ENCODE measurements at regions of chr1 and their contacts with region 1.

Region 1: DNA sequence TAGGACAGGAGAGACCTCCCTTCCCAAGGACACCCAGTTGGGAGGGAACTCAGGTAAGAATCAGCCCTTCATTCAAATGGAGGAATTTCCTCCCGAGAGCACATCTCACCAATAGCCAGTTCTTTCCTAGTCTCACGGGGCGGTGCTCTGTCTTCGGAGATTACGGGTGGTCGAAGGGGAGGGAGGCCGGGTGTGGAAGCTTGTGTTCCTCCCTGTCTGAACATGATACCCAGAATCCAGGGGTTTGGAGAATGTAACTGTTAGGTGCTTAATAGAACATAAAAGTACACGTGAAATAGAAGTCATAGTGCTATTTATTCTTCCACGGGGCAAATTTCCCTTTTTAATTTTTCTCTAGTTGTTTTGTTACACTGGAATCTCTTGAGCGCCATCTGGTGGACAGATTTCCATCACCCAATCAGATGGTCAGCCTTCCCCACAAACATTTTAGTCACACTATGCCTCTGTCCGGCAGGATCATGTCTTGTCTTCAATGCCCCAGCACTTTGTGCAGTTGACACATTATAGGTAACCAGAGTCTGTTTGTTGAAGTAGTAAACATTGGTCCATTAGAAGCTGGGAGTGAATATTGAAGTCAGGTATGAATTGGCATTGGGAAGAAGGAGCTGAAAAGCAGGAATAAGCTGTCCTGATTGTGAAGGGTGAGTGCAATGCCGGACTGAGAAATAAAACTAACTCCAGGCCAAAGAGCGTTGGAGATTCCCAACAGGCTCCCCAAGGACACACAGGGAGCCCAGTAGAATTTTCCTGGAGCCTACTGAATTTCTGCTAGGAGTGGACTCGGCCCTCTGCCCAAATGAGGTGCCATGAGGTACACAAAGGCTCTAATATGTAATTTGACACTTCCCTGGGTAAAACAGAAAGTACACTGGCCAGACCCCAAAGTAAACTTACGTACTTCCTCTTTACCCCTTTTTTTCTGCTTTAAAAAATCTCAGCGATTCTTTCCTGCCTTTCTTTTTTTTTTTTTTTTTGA is 27.6 kb upstream of the ZNF697 start:
- DNase-seq: peak; percentile 9 to 59 (median 51)
- ATAC-seq: peak; percentile 63
- H3K4me3 ChIP-seq: peak overlapping the region; percentile 26
- H3K4me3 Mint-ChIP-seq: peak overlapping the region in 9 of 10 donors; percentile 53 to 83 (median 75)
- H3K27ac ChIP-seq: no peak overlapping the region
- H3K27ac Mint-ChIP-seq: peak overlapping the region in 1 of 9 donors; percentile 21
- H3K4me1 ChIP-seq: peaks cover 0 to 4% of the 10 kb centered on the region in 2 donors
- H3K4me1 Mint-ChIP-seq: peaks cover 0 to 6% (median 4%) of the 10 kb centered on the region in 7 donors
- H3K27me3 ChIP-seq: no peaks in the 10 kb centered on the region
- H3K27me3 Mint-ChIP-seq: peaks cover 11 to 55% (median 31%) of the 10 kb centered on the region in 5 donors

Region 2: DNA sequence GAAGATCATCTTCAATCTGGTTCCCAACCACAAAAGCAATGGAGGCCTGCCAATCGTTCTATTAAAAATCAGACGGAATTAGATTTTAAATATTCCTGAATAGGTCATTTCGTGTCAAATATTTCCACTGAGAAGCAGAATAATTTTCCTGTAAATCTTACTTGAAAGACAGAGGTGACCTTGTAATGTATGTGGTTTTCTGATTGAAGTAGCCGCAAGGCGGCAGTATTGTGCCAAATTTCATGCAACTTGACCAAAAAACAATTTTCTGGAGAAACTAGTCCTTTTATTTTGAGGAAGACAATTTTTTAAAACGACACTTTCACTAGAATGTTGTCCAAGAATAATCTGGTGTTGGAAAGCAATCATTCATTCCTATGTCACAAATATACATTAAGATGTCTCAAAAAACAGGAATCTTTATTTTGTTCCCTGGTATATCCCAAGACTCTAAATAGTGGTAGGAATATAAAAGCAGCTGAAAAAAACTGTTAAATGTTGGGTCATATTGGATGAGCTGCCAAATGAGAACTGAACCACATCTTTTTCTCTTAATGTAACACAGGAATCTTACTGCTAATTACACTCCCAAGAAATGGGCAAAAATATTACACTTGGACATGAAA is 1524.2 kb before region 1 on chr1:
- CTCF ChIA-PET with region 1: no interaction called
- POLR2A ChIA-PET with region 1: no interaction called
- intact Hi-C with region 1: loop called in 1 of 2 experiments (anchors 10 kb)
- DNase-seq: peak in 1 of 9 donors; percentile 4
- ATAC-seq: no peak
- H3K4me3 ChIP-seq: no peak overlapping the region
- H3K4me3 Mint-ChIP-seq: no peak overlapping the region
- H3K27ac ChIP-seq: no peak overlapping the region
- H3K27ac Mint-ChIP-seq: no peak overlapping the region
- H3K4me1 ChIP-seq: no peaks in the 10 kb centered on the region
- H3K4me1 Mint-ChIP-seq: no peaks in the 10 kb centered on the region
- H3K27me3 ChIP-seq: no peaks in the 10 kb centered on the region
- H3K27me3 Mint-ChIP-seq: peaks cover 0 to 4% (median 0%) of the 10 kb centered on the region in 5 donors

Region 3: DNA sequence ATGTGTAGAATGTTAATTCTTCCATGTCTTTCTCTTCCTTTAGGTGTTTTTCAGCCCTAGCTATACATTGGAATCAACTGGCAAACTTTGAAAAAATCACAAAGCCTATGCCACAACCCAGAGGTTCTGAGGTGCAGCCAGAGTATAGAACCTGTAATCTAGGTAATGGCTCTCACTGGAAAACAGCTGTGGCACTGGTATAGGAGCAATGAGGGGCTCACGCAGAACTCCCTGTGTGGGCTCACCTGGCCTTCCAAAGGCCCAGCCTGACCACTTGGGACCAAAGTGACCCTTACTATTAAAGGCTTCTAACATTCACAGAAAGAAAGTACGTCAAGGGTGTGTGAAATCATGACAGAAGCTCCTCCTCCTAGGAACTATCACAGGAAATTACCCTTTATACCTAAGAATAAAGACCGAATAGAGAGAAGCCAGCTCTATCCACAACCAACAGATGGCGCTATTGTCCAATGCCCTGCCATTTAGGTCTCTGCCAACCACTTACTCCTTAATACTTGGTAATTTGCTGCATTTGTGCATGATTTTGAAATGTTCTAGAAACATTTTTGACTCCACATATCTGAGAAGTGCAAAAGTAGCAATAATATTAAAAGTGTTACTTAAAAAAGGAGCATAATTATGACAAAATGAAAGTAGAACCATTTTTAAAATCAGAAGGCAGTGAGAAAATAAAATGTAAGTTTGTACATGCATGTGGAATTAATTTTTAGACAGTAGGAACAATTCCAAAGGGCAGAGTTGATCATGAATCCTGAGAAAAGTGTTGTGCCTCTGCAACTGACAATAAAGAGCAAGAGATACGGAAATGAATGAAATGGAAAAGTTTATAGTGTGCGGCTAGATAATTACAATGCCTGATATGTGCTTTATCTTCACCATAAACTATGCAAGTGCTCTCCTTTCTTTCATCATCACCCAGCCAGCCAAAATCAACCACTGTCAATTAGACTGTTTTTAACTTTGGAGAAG is 400.2 kb before region 1 on chr1:
- CTCF ChIA-PET with region 1: interaction called, 4 read pairs
- POLR2A ChIA-PET with region 1: no interaction called
- intact Hi-C with region 1: loop called in 1 of 2 experiments (anchors 1 kb)
- DNase-seq: peak in 6 of 9 donors; percentile 21 to 43 (median 24)
- ATAC-seq: peak; percentile 59
- H3K4me3 ChIP-seq: no peak overlapping the region
- H3K4me3 Mint-ChIP-seq: no peak overlapping the region
- H3K27ac ChIP-seq: no peak overlapping the region
- H3K27ac Mint-ChIP-seq: no peak overlapping the region
- H3K4me1 ChIP-seq: no peaks in the 10 kb centered on the region
- H3K4me1 Mint-ChIP-seq: peaks cover 0 to 2% (median 0%) of the 10 kb centered on the region in 7 donors
- H3K27me3 ChIP-seq: no peaks in the 10 kb centered on the region
- H3K27me3 Mint-ChIP-seq: peaks cover 3 to 23% (median 10%) of the 10 kb centered on the region in 5 donors

Region 4: DNA sequence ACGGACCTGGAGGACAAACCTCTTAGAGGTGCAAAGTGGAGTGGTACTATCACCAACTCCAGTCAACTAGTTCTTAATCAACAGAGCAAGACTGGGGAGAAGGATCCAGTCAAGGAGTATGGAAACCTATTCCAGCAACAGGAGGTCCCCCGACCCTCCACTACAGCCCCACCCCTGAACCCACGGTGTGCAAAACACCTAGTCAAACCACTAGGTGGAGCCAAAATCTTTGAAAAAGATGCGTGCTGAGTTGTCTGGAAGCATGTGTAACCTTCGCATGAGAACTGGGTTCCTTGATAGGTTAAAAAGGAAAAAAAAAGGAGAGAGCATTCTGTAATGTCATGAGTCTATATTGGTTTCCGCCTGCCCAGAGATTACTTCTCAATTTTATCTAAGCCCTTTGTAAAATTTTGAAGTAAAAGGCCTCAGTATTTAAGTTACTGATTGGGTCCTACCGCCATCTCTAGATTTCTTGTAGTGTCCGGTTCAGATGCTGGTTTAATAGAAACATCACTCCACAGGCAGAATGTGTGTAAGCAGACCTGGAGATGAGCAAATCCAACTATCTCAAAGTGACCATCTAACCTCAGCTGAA is 389.0 kb before region 1 on chr1:
- CTCF ChIA-PET with region 1: no interaction called
- POLR2A ChIA-PET with region 1: no interaction called
- intact Hi-C with region 1: loop called in 1 of 2 experiments (anchors 1 kb)
- DNase-seq: peak in 6 of 9 donors; percentile 9 to 30 (median 19)
- ATAC-seq: no peak
- H3K4me3 ChIP-seq: no peak overlapping the region
- H3K4me3 Mint-ChIP-seq: no peak overlapping the region
- H3K27ac ChIP-seq: no peak overlapping the region
- H3K27ac Mint-ChIP-seq: no peak overlapping the region
- H3K4me1 ChIP-seq: no peaks in the 10 kb centered on the region
- H3K4me1 Mint-ChIP-seq: no peaks in the 10 kb centered on the region
- H3K27me3 ChIP-seq: no peaks in the 10 kb centered on the region
- H3K27me3 Mint-ChIP-seq: peaks cover 8 to 34% (median 15%) of the 10 kb centered on the region in 5 donors

Region 5: GRCh38 chr1:119613769-119614720 is 61.6 kb before region 1 on chr1:
- CTCF ChIA-PET with region 1: interaction called, 5 read pairs
- POLR2A ChIA-PET with region 1: no interaction called
- intact Hi-C with region 1: loop called (anchors 1 kb)
- DNase-seq: peak; percentile 18 to 77 (median 40)
- ATAC-seq: peak; percentile 78
- H3K4me3 ChIP-seq: no peak overlapping the region
- H3K4me3 Mint-ChIP-seq: no peak overlapping the region
- H3K27ac ChIP-seq: no peak overlapping the region
- H3K27ac Mint-ChIP-seq: no peak overlapping the region
- H3K4me1 ChIP-seq: no peaks in the 10 kb centered on the region
- H3K4me1 Mint-ChIP-seq: peaks cover 0 to 3% (median 0%) of the 10 kb centered on the region in 7 donors
- H3K27me3 ChIP-seq: no peaks in the 10 kb centered on the region
- H3K27me3 Mint-ChIP-seq: peaks cover 0 to 13% (median 7%) of the 10 kb centered on the region in 5 donors

Region 6: DNA sequence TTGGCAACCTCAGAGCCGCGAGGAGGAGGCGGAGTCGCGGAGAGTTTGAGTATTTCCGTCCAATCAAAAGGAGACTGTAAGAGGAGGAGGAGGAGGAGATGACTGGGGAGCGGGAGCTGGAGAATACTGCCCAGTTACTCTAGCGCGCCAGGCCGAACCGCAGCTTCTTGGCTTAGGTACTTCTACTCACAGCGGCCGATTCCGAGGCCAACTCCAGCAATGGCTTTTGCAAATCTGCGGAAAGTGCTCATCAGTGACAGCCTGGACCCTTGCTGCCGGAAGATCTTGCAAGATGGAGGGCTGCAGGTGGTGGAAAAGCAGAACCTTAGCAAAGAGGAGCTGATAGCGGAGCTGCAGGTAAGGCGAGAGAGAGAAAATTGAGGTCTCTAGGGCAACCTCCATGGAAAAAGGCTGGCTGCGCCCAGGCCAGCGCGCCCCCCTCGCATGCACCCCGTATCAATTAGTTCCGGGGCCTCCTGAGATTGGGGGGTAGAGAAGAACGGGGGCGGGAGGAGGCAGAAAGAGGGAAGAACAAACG is 36.2 kb after region 1 on chr1 and contains the start of gene PHGDH:
- CTCF ChIA-PET with region 1: no interaction called
- POLR2A ChIA-PET with region 1: no interaction called
- intact Hi-C with region 1: loop called in 1 of 2 experiments (anchors 5 kb)
- DNase-seq: peak in 8 of 9 donors; percentile 12 to 54 (median 37)
- ATAC-seq: peak; percentile 83
- H3K4me3 ChIP-seq: peak within 1 kb of the TSS; percentile 84
- H3K4me3 Mint-ChIP-seq: peak within 1 kb of the TSS; percentile 90 to 97 (median 93)
- H3K27ac ChIP-seq: no peak within 1 kb of the TSS
- H3K27ac Mint-ChIP-seq: peak within 1 kb of the TSS; percentile 1 to 89 (median 36)
- H3K4me1 ChIP-seq: no peaks in the 10 kb centered on the region
- H3K4me1 Mint-ChIP-seq: peaks cover 15 to 43% (median 26%) of the 10 kb centered on the region in 7 donors
- H3K27me3 ChIP-seq: no peaks in the 10 kb centered on the region
- H3K27me3 Mint-ChIP-seq: peaks cover 0 to 39% (median 15%) of the 10 kb centered on the region in 5 donors
- total RNA-seq, gene PHGDH: 6.9 to 79.5 (median 13.3) TPM

Region 7: DNA sequence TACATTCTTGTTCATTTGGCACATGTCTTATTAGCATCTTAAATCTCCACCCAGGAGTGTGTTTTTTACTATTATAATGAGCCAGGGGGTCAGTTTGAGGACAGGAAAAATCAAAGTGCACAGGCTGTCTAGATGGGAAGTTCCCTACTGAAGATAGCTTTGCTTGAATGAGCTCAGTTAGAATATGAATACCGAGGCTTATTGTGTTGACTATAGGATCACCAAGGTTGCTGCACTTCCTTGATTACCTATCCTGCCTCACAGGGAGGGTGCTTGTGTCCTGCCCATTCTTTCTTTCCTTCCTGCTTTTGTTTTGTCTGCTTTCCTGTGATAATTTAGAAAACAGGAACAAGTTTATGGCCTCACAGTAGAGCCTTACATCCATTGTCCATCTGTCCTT is 52.3 kb after region 1 on chr1:
- CTCF ChIA-PET with region 1: no interaction called
- POLR2A ChIA-PET with region 1: no interaction called
- intact Hi-C with region 1: no loop called
- DNase-seq: no peak
- ATAC-seq: no peak
- H3K4me3 ChIP-seq: no peak overlapping the region
- H3K4me3 Mint-ChIP-seq: no peak overlapping the region
- H3K27ac ChIP-seq: no peak overlapping the region
- H3K27ac Mint-ChIP-seq: peak overlapping the region in 1 of 9 donors; percentile 11
- H3K4me1 ChIP-seq: no peaks in the 10 kb centered on the region
- H3K4me1 Mint-ChIP-seq: peaks cover 0 to 11% (median 4%) of the 10 kb centered on the region in 7 donors
- H3K27me3 ChIP-seq: no peaks in the 10 kb centered on the region
- H3K27me3 Mint-ChIP-seq: no peaks in the 10 kb centered on the region